Colonic mucosa (tissue), 4 donors: ENCODE measurements at regions of chr5 and their contacts with region 1.

Region 1: DNA sequence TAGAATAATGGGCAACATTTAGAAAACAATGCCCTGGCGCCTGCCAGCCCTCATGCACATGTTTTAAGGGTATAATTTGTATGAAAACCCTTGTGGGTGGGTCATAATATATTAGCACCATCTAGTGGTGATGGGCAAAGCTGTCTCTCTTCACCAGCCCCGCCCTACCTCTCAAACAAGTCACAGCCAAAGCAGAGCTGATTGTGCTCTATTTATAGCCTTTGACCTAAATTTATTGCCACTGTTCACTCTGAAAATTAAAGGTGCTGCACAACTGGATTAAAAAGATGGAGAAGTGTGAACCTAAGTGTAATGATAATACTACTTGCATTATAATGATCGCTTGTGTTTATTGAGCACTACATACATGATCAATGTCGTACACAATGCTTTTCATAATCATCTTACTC is 131.9 kb upstream of the ANKH start:
- DNase-seq: peak; percentile 65
- H3K4me3 ChIP-seq: no peak overlapping the region
- H3K27ac ChIP-seq: no peak overlapping the region
- H3K4me1 ChIP-seq: no peaks in the 10 kb centered on the region
- H3K27me3 ChIP-seq: no peaks in the 10 kb centered on the region
- CTCF ChIP-seq: peak; percentile 81

Region 2: DNA sequence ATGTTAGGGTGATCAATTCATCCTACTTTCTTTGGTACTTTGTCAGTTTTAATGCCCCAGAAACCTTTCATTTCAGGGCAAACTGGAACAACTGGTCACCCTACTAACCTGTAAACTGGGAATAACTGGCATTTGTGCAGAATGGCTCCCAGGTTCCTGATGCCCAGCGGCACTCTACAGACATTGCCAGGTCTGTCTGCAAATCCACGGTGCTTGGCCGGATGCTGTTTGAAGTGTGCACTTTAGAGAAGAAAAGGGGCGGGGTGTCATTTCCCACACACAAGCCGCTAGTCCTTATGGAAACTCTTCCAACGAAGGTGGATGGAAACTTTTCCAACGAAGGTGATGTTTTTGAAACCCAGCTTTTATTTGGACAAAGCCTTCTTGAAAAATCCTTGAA is 471.8 kb before region 1 on chr5:
- intact Hi-C with region 1: no loop called
- DNase-seq: no peak
- H3K4me3 ChIP-seq: no peak overlapping the region
- H3K27ac ChIP-seq: no peak overlapping the region
- H3K4me1 ChIP-seq: no peaks in the 10 kb centered on the region
- H3K27me3 ChIP-seq: no peaks in the 10 kb centered on the region
- CTCF ChIP-seq: no peak

Region 3: GRCh38 chr5:14958196-14958595 is 45.3 kb before region 1 on chr5:
- intact Hi-C with region 1: loop called (anchors 5 kb)
- DNase-seq: no peak
- H3K4me3 ChIP-seq: no peak overlapping the region
- H3K27ac ChIP-seq: no peak overlapping the region
- H3K4me1 ChIP-seq: no peaks in the 10 kb centered on the region
- H3K27me3 ChIP-seq: no peaks in the 10 kb centered on the region
- CTCF ChIP-seq: no peak

Region 4: DNA sequence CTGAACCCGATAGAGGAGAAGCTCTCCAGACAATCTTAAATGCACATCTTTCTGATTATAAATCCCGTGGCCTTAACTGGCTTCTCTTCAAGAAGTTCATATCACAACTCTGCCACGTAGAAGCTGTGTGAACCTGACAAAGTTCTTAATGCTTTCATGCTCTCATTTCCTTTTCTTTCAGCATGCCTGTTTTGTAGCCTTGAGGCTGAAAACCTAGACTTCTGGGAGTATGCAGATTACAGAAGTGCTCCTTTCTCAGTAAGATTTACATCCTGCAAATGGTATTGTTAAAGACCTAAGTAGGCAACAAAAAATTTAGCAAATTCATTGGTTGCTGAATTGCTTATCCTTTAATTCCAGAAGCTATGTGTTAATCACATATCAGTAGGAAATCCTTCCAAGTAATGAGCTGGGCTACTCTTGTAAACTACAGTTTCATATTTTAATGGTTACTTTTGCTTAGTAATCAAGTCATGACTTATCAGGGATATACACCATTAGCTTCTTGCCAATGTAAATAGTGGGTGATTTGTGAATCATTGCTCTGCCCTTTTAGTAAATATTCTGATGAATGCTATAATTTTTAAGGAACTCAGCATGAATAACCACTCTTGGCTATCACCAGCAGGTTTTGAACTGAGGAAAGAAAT is 831.2 kb after region 1 on chr5:
- intact Hi-C with region 1: no loop called
- DNase-seq: no peak
- H3K4me3 ChIP-seq: no peak overlapping the region
- H3K27ac ChIP-seq: no peak overlapping the region
- H3K4me1 ChIP-seq: no peaks in the 10 kb centered on the region
- H3K27me3 ChIP-seq: no peaks in the 10 kb centered on the region
- CTCF ChIP-seq: no peak